Esophagus squamous epithelium (tissue), 5 donors: ENCODE measurements at regions of chr10 and their contacts with region 1.

Region 1: GRCh38 chr10:97553575-97554031 is 19.0 kb upstream of the ANKRD2 start:
- DNase-seq: no peak
- H3K4me3 ChIP-seq: no peak overlapping the region
- H3K27ac ChIP-seq: no peak overlapping the region
- H3K4me1 ChIP-seq: peaks cover 0 to 29% (median 12%) of the 10 kb centered on the region in 3 donors
- H3K27me3 ChIP-seq: no peaks in the 10 kb centered on the region
- CTCF ChIP-seq: peak; percentile 38 to 86 (median 72)
- POLR2A ChIP-seq: no peak

Region 2: GRCh38 chr10:97463363-97464132 is 90.1 kb before region 1 on chr10:
- intact Hi-C with region 1: loop called (anchors 10 kb)
- DNase-seq: no peak
- H3K4me3 ChIP-seq: no peak overlapping the region
- H3K27ac ChIP-seq: peak overlapping the region in 3 of 4 donors; percentile 39 to 56 (median 55)
- H3K4me1 ChIP-seq: peaks cover 0 to 35% (median 5%) of the 10 kb centered on the region in 3 donors
- H3K27me3 ChIP-seq: no peaks in the 10 kb centered on the region
- CTCF ChIP-seq: peak; percentile 69 to 92 (median 88)
- POLR2A ChIP-seq: no peak

Region 3: DNA sequence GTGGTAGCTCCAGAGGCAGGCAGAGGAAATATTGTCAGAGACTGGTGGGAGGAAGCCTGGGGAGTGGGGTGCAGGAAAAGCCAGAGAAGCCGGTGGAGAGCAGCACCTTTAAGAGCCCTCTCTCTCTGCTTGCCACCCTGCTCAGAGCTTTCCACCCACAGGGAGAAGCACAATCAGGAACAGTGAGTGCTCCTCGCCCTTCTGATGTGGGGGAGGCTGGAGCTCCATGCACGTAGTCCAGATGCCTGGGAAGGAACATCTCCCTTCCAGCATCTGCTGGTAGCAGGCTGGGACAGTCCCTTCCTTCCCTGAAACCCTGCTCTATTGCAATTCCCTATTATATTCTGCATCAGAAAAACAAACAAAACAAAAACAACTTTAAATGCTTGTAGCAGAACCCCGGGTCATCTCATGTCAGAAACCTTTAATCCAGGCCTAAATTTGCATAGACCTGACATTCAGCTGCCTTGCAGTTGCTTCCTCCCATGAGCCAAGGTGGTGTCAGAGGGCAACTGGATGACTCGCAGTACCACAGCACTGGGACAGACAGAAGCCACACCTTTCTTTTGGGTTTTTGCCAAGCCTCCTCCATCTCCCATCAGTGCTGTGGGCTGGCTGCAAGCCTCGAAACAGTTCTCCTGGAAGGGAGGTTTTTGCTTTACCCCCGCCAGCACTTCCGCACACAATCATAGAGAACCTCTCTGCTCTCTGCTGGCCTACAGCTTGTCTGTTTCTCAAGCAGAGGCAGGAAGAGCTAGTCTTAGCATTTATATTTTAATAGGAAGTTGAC is 120.3 kb after region 1 on chr10:
- intact Hi-C with region 1: no loop called
- DNase-seq: no peak
- H3K4me3 ChIP-seq: no peak overlapping the region
- H3K27ac ChIP-seq: no peak overlapping the region
- H3K4me1 ChIP-seq: peaks cover 0 to 6% (median 0%) of the 10 kb centered on the region in 3 donors
- H3K27me3 ChIP-seq: no peaks in the 10 kb centered on the region
- CTCF ChIP-seq: no peak
- POLR2A ChIP-seq: no peak